MCF 10A (cell line): ENCODE measurements at regions of chr20 and their contacts with region 1.

Region 1: DNA sequence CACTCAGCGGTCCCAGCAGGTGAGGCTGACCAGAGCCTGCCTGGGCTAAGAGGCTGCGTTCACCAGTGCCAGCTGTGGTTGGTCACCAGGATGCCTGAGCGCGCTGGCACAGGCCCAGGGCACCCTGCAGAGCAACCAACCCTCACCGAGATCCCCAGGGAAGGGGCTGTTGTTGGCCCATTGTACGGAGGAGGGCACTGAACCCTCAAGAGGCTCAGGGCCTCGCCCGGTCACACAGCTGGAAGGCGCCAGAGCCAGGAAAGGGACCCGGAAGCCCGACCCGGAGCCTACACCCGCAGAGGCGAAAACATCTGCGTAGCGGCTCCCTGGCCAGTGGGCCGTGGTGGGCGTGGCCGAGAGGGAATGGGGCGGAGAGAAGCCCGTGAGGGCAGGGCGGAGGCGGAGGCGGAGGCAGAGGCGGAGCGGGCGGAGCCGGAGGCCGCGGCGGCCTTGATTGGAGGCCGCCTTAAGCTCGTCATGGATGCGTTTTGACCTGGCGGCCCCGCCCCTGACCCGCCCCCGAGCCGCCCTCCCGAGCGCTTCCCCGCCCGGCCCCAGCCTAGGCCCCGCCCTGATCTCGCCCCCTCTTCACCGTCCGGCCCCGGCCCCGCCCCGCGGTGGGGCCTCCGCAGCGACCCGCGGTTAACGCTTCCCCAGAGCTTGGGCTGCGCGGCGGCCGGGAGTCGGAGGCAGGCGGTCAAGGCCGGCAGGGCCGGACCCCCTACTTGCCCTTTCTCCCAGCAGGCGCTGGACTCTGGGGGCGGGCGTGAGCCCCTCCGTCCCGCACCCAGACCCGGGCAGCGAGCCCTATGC is 2.2 kb upstream of the MRGBP start:
- DNase-seq: peak; percentile 94
- H3K4me3 Mint-ChIP-seq: peak overlapping the region; percentile 76
- H3K27ac Mint-ChIP-seq: peak overlapping the region; percentile 87
- H3K4me1 Mint-ChIP-seq: peaks cover 17% of the 10 kb centered on the region
- H3K27me3 Mint-ChIP-seq: no peaks in the 10 kb centered on the region
- CTCF ChIP-seq: no peak

Region 2: GRCh38 chr20:62386383-62387218 is 407.5 kb before region 1 on chr20 and contains the start of gene RPS21:
- CTCF ChIA-PET with region 1: interaction called, 5 read pairs
- POLR2A ChIA-PET with region 1: interaction called, 14 read pairs
- intact Hi-C with region 1: no loop called
- DNase-seq: peak; percentile 89
- H3K4me3 Mint-ChIP-seq: peak within 1 kb of the TSS; percentile 92
- H3K27ac Mint-ChIP-seq: peak within 1 kb of the TSS; percentile 96
- H3K4me1 Mint-ChIP-seq: peaks cover 13% of the 10 kb centered on the region
- H3K27me3 Mint-ChIP-seq: no peaks in the 10 kb centered on the region
- CTCF ChIP-seq: no peak
- total RNA-seq, gene RPS21: 1,978 and 2,055 TPM in 2 replicates

Region 3: DNA sequence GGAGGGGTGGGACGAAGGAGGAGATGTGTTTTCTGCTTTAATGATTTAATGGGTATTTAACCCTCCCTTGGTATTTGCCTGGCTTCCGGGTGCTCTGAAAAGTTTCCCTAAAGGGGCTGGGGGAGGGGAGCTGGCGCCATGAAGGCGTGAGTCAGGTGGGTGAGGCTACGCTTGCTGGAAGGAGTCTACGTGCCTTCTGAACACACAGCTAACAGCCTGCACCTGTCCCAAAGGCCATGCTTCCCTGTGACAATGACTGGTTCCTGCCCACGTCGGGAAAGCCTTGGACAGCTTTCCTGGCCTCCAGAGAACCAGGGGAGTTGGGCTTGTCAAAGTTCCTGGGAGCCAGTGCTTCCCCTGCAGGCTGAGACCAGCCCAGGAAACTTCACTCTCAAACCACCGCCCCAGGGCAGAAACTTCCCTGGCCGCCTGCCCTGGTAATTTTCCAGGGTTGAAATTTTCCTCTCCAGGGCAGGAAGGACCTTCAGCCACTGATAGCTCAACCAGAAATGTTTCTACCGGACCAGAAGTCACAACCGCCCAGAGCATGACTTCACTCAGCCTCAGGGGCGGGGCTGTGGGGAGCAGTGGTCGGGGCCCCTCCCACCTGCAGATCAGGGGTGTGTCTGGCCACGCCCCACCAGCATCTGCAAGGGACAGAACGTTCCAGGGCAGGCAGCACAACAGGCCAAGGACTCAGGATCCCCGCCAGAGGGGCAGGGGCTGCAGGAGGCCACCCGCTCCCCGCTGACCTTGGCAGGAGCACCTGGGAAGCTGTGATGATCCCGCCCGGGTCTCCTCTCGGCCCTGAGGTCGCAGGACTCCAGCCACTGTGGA is 170.4 kb before region 1 on chr20:
- CTCF ChIA-PET with region 1: interaction called, 20 read pairs
- POLR2A ChIA-PET with region 1: interaction called, 13 read pairs
- intact Hi-C with region 1: no loop called
- DNase-seq: peak; percentile 97
- H3K4me3 Mint-ChIP-seq: peak overlapping the region; percentile 44
- H3K27ac Mint-ChIP-seq: peak overlapping the region; percentile 93
- H3K4me1 Mint-ChIP-seq: peaks cover 19% of the 10 kb centered on the region
- H3K27me3 Mint-ChIP-seq: no peaks in the 10 kb centered on the region
- CTCF ChIP-seq: no peak

Region 4: DNA sequence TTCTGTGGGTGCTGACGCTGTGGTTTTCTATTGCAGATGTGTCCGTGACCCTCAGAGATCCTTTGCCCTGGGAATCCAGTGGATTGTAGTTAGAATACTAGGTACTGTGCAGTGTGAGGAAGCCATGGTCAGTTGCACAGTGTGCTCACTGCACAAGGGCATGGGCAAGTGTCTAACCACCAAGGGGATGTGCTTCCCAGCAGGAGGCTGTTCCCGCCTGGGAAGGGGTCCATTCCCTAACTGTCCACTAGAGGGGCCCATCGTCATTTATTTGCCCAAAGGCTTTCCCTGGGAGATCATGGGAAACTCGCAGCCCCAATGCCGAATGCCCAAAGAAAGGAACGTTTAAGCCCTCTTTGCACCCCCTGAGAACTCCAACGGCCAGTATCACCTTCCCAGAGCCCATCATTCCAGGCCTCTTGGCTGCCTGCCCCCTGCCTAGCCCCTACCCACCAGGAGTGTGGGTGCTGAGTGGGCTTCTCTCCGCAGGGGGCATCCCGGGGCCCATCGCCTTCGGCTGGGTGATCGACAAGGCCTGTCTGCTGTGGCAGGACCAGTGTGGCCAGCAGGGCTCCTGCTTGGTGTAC is 125.6 kb before region 1 on chr20:
- CTCF ChIA-PET with region 1: interaction called, 20 read pairs
- POLR2A ChIA-PET with region 1: interaction called, 5 read pairs
- intact Hi-C with region 1: loop called (anchors 1 kb)
- DNase-seq: peak; percentile 73
- H3K4me3 Mint-ChIP-seq: no peak overlapping the region
- H3K27ac Mint-ChIP-seq: no peak overlapping the region
- H3K4me1 Mint-ChIP-seq: peaks cover 7% of the 10 kb centered on the region
- H3K27me3 Mint-ChIP-seq: no peaks in the 10 kb centered on the region
- CTCF ChIP-seq: peak; percentile 67

Region 5: DNA sequence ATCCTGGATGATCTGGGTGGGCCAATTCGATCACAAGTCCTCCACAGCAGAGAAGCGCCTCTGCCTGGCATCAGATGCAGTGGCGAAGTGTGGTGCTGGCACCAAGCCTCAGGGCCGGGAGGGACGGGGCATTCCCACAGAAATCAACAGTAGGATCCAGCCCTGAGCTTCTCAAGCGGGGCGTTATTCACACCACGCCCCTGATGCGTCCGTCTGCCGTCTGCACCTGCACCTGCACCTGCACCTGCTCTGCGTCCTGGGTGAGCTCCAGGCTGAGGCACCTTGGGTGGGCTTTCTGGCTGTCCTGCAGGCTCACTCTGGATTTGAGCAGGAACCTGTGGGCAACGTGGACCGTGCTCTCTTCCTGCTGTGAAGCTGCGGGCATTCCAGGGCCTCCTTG is 99.2 kb before region 1 on chr20:
- CTCF ChIA-PET with region 1: interaction called, 26 read pairs
- POLR2A ChIA-PET with region 1: interaction called, 6 read pairs
- intact Hi-C with region 1: no loop called
- DNase-seq: no peak
- H3K4me3 Mint-ChIP-seq: no peak overlapping the region
- H3K27ac Mint-ChIP-seq: no peak overlapping the region
- H3K4me1 Mint-ChIP-seq: no peaks in the 10 kb centered on the region
- H3K27me3 Mint-ChIP-seq: peaks cover 27% of the 10 kb centered on the region
- CTCF ChIP-seq: no peak

Region 6: GRCh38 chr20:62772990-62773844 is 20.9 kb before region 1 on chr20:
- CTCF ChIA-PET with region 1: interaction called, 43 read pairs
- POLR2A ChIA-PET with region 1: interaction called, 44 read pairs
- intact Hi-C with region 1: no loop called
- DNase-seq: peak; percentile 96
- H3K4me3 Mint-ChIP-seq: peak overlapping the region; percentile 58
- H3K27ac Mint-ChIP-seq: peak overlapping the region; percentile 84
- H3K4me1 Mint-ChIP-seq: peaks cover 41% of the 10 kb centered on the region
- H3K27me3 Mint-ChIP-seq: no peaks in the 10 kb centered on the region
- CTCF ChIP-seq: no peak

Region 7: DNA sequence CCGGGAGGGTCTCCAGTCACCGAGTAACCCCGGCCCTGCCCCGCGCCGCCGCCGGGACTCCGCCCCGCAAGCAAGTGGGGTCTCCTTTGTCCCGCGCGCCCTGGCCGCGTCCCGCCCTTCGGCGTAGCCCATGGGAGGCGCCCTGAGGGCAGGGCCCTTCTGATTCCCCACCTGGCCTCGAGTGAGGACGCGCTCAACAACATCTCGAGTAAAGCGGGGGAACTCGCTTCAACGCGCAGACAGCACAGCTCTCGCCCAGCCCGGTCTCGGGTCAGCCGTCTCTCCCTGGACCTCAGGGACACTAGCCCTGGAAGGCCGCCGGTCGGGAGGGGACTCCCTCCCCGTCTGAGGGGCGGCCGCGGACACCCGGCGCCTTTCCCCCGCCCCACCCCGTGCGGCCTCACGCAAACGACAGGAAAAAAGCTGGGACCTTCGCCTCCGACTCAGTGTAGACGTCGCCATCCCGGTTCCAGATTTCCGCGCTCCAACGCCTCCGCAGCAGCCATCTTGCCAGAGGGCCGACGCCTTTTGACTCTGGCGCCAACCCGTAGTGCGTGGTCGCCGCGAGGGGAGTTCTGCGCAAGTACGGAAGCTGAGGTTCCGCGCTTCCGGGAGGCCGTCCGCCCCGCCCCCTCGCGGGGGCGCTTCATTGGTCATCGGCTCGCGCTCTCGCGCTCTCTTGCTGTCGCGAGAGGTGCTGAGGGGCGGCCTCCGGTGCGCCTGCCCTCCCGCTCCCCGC is 143.4 kb after region 1 on chr20:
- CTCF ChIA-PET with region 1: interaction called, 4 read pairs
- POLR2A ChIA-PET with region 1: interaction called, 11 read pairs
- intact Hi-C with region 1: no loop called
- DNase-seq: peak; percentile 94
- H3K4me3 Mint-ChIP-seq: no peak overlapping the region
- H3K27ac Mint-ChIP-seq: peak overlapping the region; percentile 97
- H3K4me1 Mint-ChIP-seq: peaks cover 15% of the 10 kb centered on the region
- H3K27me3 Mint-ChIP-seq: no peaks in the 10 kb centered on the region
- CTCF ChIP-seq: no peak